Vagina (tissue), 2 donors: ENCODE measurements at regions of chr6 and their contacts with region 1.

Region 1: GRCh38 chr6:112311950-112312547 is 35.1 kb upstream of the RFPL4B start:
- DNase-seq: no peak
- H3K4me3 ChIP-seq: no peak overlapping the region
- H3K27ac ChIP-seq: no peak overlapping the region
- H3K4me1 ChIP-seq: peaks cover 8% of the 10 kb centered on the region
- H3K27me3 ChIP-seq: no peaks in the 10 kb centered on the region
- CTCF ChIP-seq: peak; percentile 28 to 63 (median 30)
- POLR2A ChIP-seq: no peak

Region 2: DNA sequence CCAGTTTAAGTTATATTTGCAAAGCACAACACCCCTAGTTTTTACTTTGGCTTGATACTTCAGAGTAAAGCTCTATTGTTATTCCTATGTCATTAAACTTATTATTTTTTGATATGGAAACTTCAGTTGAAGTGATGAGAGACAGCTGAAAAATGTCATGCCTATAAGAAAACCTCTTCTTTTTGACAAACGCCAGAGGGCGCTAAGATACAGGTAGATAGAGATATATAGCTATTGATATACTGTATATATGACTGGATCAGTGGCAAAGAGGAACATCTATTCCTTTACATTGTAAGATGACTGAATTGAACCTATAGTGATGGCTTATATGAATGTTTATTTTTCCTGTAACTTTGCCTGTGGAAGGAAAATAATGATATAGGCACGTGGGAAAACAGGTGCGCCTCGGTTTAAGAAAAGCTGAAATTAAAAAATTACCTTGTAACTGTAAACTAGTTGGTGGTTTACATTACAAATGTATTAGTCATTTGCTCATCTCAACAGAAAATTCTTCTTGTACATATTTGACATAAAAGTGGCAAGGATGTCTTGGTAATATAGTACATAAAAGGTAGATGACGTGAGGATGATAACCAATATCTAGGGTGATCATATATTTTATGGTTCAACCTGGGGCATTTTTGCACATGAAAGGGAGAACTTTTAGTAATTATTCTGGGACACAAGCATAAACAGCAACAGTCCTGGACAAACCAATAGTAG is 131.8 kb before region 1 on chr6:
- intact Hi-C with region 1: loop called (anchors 5 kb)
- DNase-seq: no peak
- H3K4me3 ChIP-seq: no peak overlapping the region
- H3K27ac ChIP-seq: no peak overlapping the region
- H3K4me1 ChIP-seq: no peaks in the 10 kb centered on the region
- H3K27me3 ChIP-seq: no peaks in the 10 kb centered on the region
- CTCF ChIP-seq: peak; percentile 57 to 77 (median 68)
- POLR2A ChIP-seq: no peak